ENCODE measurements at regions of chr1 and their contacts with region 1.

Region 1: GRCh38 chr1:202810615-202811295 is at the start of gene PCAT6:
- DNase-seq: peak; percentile 87 to 93 (median 92)
- H3K4me3 ChIP-seq: peak within 1 kb of the TSS; percentile 73 to 81 (median 75)
- H3K4me3 Mint-ChIP-seq: peak within 1 kb of the TSS; percentile 93 to 99
- H3K27ac ChIP-seq: peak within 1 kb of the TSS; percentile 7 to 83
- H3K27ac Mint-ChIP-seq: peak within 1 kb of the TSS; percentile 79 to 95 (median 89)
- H3K4me1 ChIP-seq: peaks cover 34 to 39% of the 10 kb centered on the region in 2 donors
- H3K4me1 Mint-ChIP-seq: peaks cover 38% of the 10 kb centered on the region
- H3K27me3 ChIP-seq: peaks cover 0 to 13% of the 10 kb centered on the region in 2 donors
- H3K27me3 Mint-ChIP-seq: peaks cover 15 to 29% (median 16%) of the 10 kb centered on the region in 3 donors
- CTCF ChIP-seq: no peak
- polyA plus RNA-seq, gene PCAT6: 1.0 TPM in 1 of 3 donors, not detected in the others

Region 2: DNA sequence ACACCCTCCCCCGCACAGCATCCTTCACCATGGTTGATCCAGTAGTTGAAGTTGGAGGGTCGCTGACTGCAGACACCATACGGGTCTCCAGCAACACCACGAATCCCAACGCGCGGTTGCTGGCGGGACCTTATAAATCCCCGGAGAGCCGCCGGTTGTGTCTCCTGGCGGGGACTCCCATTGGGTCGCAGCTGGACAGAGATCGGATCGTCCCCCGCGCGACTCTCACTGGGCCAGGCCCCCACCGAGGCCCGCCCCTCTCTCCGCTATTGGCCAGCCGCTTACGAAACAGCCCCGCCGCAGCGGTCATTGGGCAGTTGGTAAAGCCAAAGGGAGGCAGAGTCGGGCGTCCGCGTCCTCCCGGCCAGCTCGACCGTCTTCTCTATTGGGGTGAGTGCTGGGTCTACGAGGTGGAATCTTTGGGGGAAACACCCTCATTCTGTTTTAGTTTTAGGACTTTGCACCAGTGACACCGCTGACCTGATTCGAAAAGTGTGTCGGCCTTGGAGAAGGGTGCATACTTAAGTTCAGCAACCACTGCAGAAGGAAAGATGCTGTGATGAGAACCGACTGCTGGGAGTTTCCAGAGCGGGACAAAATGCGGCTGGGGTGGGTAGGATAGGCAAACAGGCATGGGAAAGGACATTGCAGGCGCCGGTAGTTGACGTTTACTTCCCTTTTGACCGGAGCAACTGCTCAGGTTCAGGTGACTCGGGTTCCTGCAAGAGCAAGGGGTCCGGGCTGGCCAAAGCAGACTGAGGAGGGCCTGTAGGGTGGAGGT is 50.9 kb after region 1 on chr1:
- intact Hi-C with region 1: loop called in 1 of 2 experiments (anchors 10 kb)
- DNase-seq: peak; percentile 82 to 90 (median 85)
- H3K4me3 ChIP-seq: peak overlapping the region; percentile 32 to 83 (median 56)
- H3K4me3 Mint-ChIP-seq: peak overlapping the region; percentile 90 to 95
- H3K27ac ChIP-seq: no peak overlapping the region
- H3K27ac Mint-ChIP-seq: peak overlapping the region in 3 of 7 donors; percentile 37 to 75 (median 64)
- H3K4me1 ChIP-seq: peaks cover 33 to 37% of the 10 kb centered on the region in 2 donors
- H3K4me1 Mint-ChIP-seq: peaks cover 52% of the 10 kb centered on the region
- H3K27me3 ChIP-seq: peaks cover 0 to 12% of the 10 kb centered on the region in 2 donors
- H3K27me3 Mint-ChIP-seq: peaks cover 12 to 19% (median 16%) of the 10 kb centered on the region in 3 donors
- CTCF ChIP-seq: no peak

Region 3: GRCh38 chr1:202888531-202889360 is 78.0 kb after region 1 on chr1 and contains the start of gene RABIF:
- intact Hi-C with region 1: loop called in 1 of 2 experiments (anchors 5 kb)
- DNase-seq: peak; percentile 94 to 98 (median 95)
- H3K4me3 ChIP-seq: peak within 1 kb of the TSS; percentile 91 to 93 (median 93)
- H3K4me3 Mint-ChIP-seq: peak within 1 kb of the TSS; percentile 96 to 97
- H3K27ac ChIP-seq: peak within 1 kb of the TSS; percentile 96 to 98
- H3K27ac Mint-ChIP-seq: peak within 1 kb of the TSS; percentile 96 to 99 (median 99)
- H3K4me1 ChIP-seq: peaks cover 14 to 30% of the 10 kb centered on the region in 2 donors
- H3K4me1 Mint-ChIP-seq: peaks cover 22% of the 10 kb centered on the region
- H3K27me3 ChIP-seq: no peaks in the 10 kb centered on the region
- H3K27me3 Mint-ChIP-seq: peaks cover 0 to 2% (median 0%) of the 10 kb centered on the region in 3 donors
- CTCF ChIP-seq: no peak
- polyA plus RNA-seq, gene RABIF: 7.8 to 24.6 (median 22.8) TPM

Region 4: DNA sequence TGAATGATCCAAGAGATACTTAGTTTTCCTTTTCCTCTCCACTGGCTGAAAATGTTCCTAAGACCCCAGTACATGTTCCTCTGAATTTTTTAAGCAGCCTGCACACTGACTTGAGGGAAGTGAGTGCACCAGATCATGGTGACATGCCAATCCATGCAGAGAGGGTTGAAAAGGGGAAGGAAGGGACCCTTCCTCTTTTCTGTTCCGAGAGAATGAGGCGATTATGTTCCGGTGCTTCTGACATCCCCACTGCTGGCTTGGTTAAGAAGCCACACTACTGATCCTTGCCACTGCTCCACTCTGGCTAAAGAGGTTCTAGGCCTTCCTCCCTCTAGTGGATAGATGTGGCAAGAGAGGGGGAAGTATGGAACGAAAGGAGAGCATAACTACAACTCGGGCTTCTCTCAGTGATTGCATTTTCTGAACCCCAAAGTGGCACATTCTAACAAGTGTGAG is 158.1 kb after region 1 on chr1:
- intact Hi-C with region 1: loop called in 1 of 2 experiments (anchors 5 kb)
- DNase-seq: peak; percentile 96 to 98 (median 97)
- H3K4me3 ChIP-seq: peak overlapping the region in 2 of 3 experiments; percentile 11 to 91
- H3K4me3 Mint-ChIP-seq: peak overlapping the region; percentile 50 to 90
- H3K27ac ChIP-seq: peak overlapping the region; percentile 81 to 91
- H3K27ac Mint-ChIP-seq: peak overlapping the region; percentile 90 to 98 (median 96)
- H3K4me1 ChIP-seq: peaks cover 43 to 51% of the 10 kb centered on the region in 2 donors
- H3K4me1 Mint-ChIP-seq: peaks cover 45% of the 10 kb centered on the region
- H3K27me3 ChIP-seq: no peaks in the 10 kb centered on the region
- H3K27me3 Mint-ChIP-seq: peaks cover 0 to 2% (median 2%) of the 10 kb centered on the region in 3 donors
- CTCF ChIP-seq: peak; percentile 74